Calu3 (cell line): ENCODE measurements at regions of chr3 and their contacts with region 1.

Region 1: DNA sequence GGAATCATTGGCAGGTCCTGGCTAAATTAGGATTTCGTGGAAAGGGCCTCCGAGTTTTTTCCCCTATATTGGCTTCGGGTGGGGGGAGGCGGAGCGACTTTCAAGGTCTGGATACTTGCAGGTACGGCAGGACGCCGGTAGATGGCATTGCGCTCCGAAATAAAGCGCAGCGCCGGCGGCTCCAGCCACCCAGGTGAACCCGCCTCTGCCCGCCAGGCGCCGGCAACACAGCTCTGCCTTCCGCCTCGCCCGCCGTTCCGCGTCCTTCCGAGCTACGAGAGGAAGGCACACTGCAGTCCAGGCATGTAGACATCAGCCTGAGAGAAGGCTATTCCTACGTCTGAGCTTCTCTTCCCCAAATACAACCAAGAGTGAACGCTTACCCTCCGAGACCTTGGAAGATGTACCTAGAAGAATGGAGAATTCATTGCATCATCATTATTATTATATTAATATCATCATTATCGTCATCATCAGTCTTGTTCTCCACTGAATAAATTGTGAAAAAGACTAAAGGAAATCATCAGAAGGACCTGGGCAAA is 514.1 kb downstream of the MECOM start:
- DNase-seq: peak; percentile 97
- H3K4me3 Mint-ChIP-seq: peak overlapping the region; percentile 97
- H3K27ac Mint-ChIP-seq: peak overlapping the region; percentile 99
- H3K4me1 Mint-ChIP-seq: peaks cover 20% of the 10 kb centered on the region
- H3K27me3 Mint-ChIP-seq: no peaks in the 10 kb centered on the region
- CTCF ChIP-seq: peak; percentile 98

Region 2: DNA sequence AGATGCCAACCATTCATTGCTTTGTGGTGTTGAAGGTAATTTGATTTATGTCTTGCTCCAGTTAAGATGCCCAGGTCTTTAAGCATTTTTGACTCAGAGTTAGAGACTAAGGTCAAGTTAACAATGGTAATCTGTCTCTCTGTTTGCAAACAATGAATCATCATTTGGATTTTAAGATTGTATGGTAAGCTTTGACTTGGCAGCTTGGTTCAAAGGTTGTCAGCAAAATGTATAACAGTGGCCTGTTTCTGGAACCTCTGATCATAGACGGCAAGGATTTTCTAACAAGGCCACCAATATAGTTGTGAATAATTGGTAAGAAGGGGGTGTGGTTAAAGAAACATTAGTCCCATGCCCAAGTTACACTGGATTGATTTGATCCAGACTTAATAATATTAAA is 278.5 kb before region 1 on chr3:
- CTCF ChIA-PET with region 1: interaction called, 3 read pairs
- intact Hi-C with region 1: loop called (anchors 5 kb)
- DNase-seq: peak; percentile 41
- H3K4me3 Mint-ChIP-seq: peak overlapping the region; percentile 20
- H3K27ac Mint-ChIP-seq: peak overlapping the region; percentile 78
- H3K4me1 Mint-ChIP-seq: peaks cover 86% of the 10 kb centered on the region
- H3K27me3 Mint-ChIP-seq: no peaks in the 10 kb centered on the region
- CTCF ChIP-seq: no peak

Region 3: GRCh38 chr3:169112153-169112892 is 37.1 kb before region 1 on chr3:
- CTCF ChIA-PET with region 1: no interaction called
- intact Hi-C with region 1: no loop called
- DNase-seq: no peak
- H3K4me3 Mint-ChIP-seq: no peak overlapping the region
- H3K27ac Mint-ChIP-seq: peak overlapping the region; percentile 63
- H3K4me1 Mint-ChIP-seq: peaks cover 45% of the 10 kb centered on the region
- H3K27me3 Mint-ChIP-seq: no peaks in the 10 kb centered on the region
- CTCF ChIP-seq: no peak

Region 4: DNA sequence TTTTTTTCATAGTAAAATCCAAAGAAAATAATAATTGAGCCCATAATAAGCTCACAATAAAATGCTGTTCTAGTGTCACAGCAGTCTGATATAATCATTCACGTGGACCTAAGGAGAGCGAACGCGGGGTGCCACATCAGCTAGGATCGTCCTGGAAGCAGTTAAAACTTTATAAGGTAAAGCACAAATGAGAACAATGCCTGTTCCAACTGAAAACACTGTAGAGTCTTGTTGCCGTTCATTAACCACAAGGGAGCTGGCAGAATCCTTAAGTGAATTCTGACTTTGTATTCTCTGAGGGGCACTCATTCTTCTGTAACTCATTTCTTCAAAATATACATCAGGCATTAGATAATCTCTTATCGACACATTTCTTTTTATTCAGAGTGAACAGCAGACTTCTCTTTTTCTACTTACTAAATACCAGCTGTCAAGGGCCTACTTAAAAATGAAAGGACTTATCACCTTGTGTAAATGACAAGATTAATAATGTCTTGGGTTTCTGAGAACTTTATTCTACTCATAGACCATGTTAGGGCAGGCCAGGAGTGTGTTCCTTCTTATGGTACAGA is 10.5 kb before region 1 on chr3:
- CTCF ChIA-PET with region 1: interaction called, 30 read pairs
- intact Hi-C with region 1: loop called (anchors 1 kb)
- DNase-seq: no peak
- H3K4me3 Mint-ChIP-seq: peak overlapping the region; percentile 62
- H3K27ac Mint-ChIP-seq: peak overlapping the region; percentile 83
- H3K4me1 Mint-ChIP-seq: peaks cover 60% of the 10 kb centered on the region
- H3K27me3 Mint-ChIP-seq: no peaks in the 10 kb centered on the region
- CTCF ChIP-seq: no peak

Region 5: GRCh38 chr3:169348929-169349613 is 199.7 kb after region 1 on chr3:
- CTCF ChIA-PET with region 1: interaction called, 25 read pairs
- intact Hi-C with region 1: loop called (anchors 1 kb)
- DNase-seq: peak; percentile 60
- H3K4me3 Mint-ChIP-seq: peak overlapping the region; percentile 65
- H3K27ac Mint-ChIP-seq: peak overlapping the region; percentile 96
- H3K4me1 Mint-ChIP-seq: peaks cover 74% of the 10 kb centered on the region
- H3K27me3 Mint-ChIP-seq: no peaks in the 10 kb centered on the region
- CTCF ChIP-seq: no peak

Region 6: DNA sequence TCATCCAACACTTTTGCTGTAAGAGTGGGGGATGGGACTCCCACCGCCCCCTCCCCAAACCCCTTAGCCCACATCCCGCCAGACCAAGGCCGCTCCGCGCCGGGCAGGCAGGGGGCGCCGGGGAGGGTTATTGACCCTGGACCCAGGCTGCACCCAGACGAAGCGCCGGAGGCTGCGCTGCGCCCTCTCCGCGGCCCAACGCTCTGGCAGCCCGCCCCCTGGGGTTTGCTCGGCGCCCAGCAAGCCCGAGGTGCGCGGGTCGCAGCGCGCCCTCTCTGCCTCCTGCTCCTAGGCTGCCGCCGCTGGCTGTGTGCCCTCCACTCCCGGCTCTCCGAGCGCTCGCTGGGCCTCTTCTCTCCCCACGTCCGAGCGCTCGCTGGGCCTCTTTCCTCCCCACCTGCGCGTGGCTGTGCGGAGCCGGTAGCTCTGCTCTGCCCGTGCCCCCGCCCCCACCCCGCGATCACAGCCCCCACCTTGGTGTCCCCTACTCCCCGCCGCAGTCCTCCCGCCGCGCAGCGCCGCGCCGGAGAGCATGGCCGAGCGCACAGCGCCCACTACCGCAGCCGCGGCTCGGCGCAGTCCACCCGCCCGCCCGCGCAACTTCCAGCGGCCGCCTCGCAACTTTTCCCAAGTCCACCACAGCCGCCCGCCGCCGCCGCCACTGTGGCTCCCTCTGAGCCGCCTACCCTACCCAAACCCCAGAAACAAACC is 512.9 kb after region 1 on chr3:
- CTCF ChIA-PET with region 1: interaction called, 13 read pairs
- intact Hi-C with region 1: loop called (anchors 1 kb)
- DNase-seq: peak; percentile 97
- H3K4me3 Mint-ChIP-seq: peak overlapping the region; percentile 79
- H3K27ac Mint-ChIP-seq: peak overlapping the region; percentile 60
- H3K4me1 Mint-ChIP-seq: peaks cover 53% of the 10 kb centered on the region
- H3K27me3 Mint-ChIP-seq: no peaks in the 10 kb centered on the region
- CTCF ChIP-seq: peak; percentile 88

Region 7: DNA sequence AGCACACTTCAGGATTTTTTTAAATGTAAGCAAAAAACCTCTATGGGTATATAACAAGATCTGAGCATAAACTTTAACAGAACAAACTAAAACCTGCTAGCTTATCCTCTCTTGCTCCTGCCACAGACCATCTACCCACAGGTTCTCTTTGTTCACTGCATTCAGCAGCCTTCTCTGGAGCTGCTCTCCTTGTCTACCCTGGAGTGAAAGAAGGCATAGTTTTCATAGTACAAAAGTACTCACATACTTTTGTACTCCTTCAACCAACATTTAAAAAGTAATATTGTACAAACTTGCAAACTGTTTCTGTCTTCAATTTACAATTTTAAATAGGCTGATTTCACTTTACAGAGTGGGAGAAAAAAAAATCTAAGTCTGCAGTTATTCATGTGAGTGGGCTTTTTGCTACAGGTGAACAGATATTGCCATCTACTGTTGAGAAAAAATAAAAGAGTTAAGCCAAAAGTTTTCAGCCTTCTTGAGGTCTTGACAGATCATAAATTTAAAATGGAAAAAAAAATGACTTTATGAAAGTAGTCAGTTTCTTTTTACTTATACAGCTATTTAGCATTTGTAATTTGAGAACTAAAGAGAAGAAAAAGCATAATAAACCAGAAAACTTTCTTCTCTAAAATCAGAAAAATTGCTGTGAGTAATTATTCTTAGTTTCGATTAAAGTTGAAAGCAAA is 595.1 kb after region 1 on chr3:
- CTCF ChIA-PET with region 1: interaction called, 7 read pairs
- intact Hi-C with region 1: loop called (anchors 1 kb)
- DNase-seq: no peak
- H3K4me3 Mint-ChIP-seq: no peak overlapping the region
- H3K27ac Mint-ChIP-seq: no peak overlapping the region
- H3K4me1 Mint-ChIP-seq: peaks cover 12% of the 10 kb centered on the region
- H3K27me3 Mint-ChIP-seq: peaks cover 14% of the 10 kb centered on the region
- CTCF ChIP-seq: peak; percentile 42